IMR-90 (cell line): ENCODE measurements at regions of chr7 and their contacts with region 1.

Region 1: GRCh38 chr7:90552521-90552920 is 43.6 kb upstream of the CDK14 start:
- DNase-seq: peak; percentile 35
- ATAC-seq: 0 out of 2 replicates have a peak, but pooled peaks have one; percentile 59
- H3K4me3 ChIP-seq: no peak overlapping the region
- H3K27ac ChIP-seq: no peak overlapping the region
- H3K4me1 ChIP-seq: peaks cover 2% of the 10 kb centered on the region; the same call in 1 of the 2 replicates
- H3K27me3 ChIP-seq: peaks cover 4% of the 10 kb centered on the region; the same call in 1 of the 2 replicates
- CTCF ChIP-seq: peak; percentile 42
- POLR2A ChIP-seq: no peak
- RAD21 ChIP-seq: peak; percentile 46

Region 2: GRCh38 chr7:89809291-89809690 is 743.2 kb before region 1 on chr7:
- CTCF ChIA-PET with region 1: no interaction called
- POLR2A ChIA-PET with region 1: no interaction called
- dilution Hi-C with region 1: no loop called
- in situ Hi-C with region 1: no loop called
- intact Hi-C with region 1: no loop called
- DNase-seq: no peak
- ATAC-seq: no peak
- H3K4me3 ChIP-seq: no peak overlapping the region
- H3K27ac ChIP-seq: no peak overlapping the region
- H3K4me1 ChIP-seq: no peaks in the 10 kb centered on the region
- H3K27me3 ChIP-seq: no peaks in the 10 kb centered on the region
- CTCF ChIP-seq: no peak
- POLR2A ChIP-seq: no peak
- RAD21 ChIP-seq: no peak

Region 3: DNA sequence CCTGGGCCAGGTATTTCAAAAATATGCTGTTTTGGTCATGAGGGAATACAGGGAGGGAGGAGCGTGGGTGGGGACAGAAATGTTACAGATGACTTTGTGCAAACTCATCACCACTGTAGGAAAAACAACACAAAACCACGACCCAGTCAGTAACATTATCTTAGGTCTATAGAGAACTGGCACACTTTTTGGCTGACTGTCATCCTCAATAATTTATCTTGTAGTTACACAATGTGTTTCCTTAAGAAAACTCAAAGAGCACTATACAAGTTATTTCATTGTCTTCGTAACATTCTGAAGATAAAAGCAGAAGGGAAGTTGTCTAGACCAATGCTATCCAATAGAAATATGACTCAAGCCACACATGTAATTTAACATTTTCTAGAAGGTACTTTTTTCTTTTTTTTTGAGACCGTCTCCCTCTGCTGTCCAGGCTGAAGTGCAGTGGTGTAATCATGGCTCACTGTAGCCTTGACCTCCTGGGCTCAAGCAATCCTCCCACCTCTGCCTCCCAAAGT is 26.7 kb after region 1 on chr7:
- CTCF ChIA-PET with region 1: no interaction called
- POLR2A ChIA-PET with region 1: no interaction called
- dilution Hi-C with region 1: no loop called
- in situ Hi-C with region 1: no loop called
- intact Hi-C with region 1: no loop called
- DNase-seq: peak; percentile 81
- ATAC-seq: peak; percentile 63
- H3K4me3 ChIP-seq: no peak overlapping the region
- H3K27ac ChIP-seq: no peak overlapping the region
- H3K4me1 ChIP-seq: peaks cover 2% of the 10 kb centered on the region; the same call in 1 of the 2 replicates
- H3K27me3 ChIP-seq: no peaks in the 10 kb centered on the region
- CTCF ChIP-seq: no peak; the same call in 1 of the 2 replicates
- POLR2A ChIP-seq: no peak
- RAD21 ChIP-seq: no peak

Region 4: DNA sequence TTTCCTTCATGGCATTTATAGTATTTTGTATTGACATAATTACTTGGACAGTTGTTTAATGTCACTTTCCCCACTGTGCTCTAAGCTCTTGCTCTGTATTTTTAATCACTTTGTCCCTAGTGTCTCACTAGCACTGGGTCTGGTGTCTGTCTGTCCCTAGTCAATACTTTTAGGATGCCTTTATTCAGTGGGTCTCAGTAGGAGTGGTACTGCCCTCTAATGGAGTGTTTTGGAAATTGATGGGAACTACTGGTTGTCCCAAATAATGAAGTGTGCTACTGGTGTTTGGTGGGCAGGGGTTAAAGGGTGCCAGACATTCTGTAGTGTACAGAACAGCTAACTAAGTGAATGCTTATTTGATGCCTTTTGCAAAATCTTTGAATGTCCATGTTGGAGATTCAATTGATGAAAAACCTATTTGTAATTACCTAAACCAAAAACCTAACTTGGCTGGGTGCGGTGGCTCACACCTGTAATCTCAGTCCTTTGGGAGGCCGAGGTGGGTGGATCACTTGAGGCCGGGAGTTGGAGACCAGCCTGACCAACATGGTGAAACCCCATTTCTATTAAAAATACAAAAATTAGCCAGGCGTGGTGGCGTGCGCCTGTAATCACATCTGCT is 76.9 kb after region 1 on chr7:
- CTCF ChIA-PET with region 1: interaction called, 4 read pairs
- POLR2A ChIA-PET with region 1: interaction called, 3 read pairs
- dilution Hi-C with region 1: no loop called
- in situ Hi-C with region 1: no loop called
- intact Hi-C with region 1: loop called (anchors 2 kb)
- DNase-seq: peak; percentile 63
- ATAC-seq: peak; percentile 73
- H3K4me3 ChIP-seq: no peak overlapping the region
- H3K27ac ChIP-seq: no peak overlapping the region
- H3K4me1 ChIP-seq: peaks cover 8% of the 10 kb centered on the region
- H3K27me3 ChIP-seq: no peaks in the 10 kb centered on the region
- CTCF ChIP-seq: peak; percentile 68
- POLR2A ChIP-seq: no peak
- RAD21 ChIP-seq: peak; percentile 76

Region 5: GRCh38 chr7:91000008-91000979 is 447.8 kb after region 1 on chr7:
- CTCF ChIA-PET with region 1: no interaction called
- POLR2A ChIA-PET with region 1: no interaction called
- dilution Hi-C with region 1: no loop called
- in situ Hi-C with region 1: loop called (anchors 25 kb)
- intact Hi-C with region 1: no loop called
- DNase-seq: peak; percentile 47
- ATAC-seq: peak; percentile 59
- H3K4me3 ChIP-seq: no peak overlapping the region
- H3K27ac ChIP-seq: 0 out of 2 replicates have a peak overlapping the region, but pooled peaks have one; percentile 32
- H3K4me1 ChIP-seq: peaks cover 5% of the 10 kb centered on the region
- H3K27me3 ChIP-seq: no peaks in the 10 kb centered on the region
- CTCF ChIP-seq: no peak
- POLR2A ChIP-seq: no peak
- RAD21 ChIP-seq: no peak